ENCODE measurements at regions of chr20 and their contacts with region 1.

Region 1: DNA sequence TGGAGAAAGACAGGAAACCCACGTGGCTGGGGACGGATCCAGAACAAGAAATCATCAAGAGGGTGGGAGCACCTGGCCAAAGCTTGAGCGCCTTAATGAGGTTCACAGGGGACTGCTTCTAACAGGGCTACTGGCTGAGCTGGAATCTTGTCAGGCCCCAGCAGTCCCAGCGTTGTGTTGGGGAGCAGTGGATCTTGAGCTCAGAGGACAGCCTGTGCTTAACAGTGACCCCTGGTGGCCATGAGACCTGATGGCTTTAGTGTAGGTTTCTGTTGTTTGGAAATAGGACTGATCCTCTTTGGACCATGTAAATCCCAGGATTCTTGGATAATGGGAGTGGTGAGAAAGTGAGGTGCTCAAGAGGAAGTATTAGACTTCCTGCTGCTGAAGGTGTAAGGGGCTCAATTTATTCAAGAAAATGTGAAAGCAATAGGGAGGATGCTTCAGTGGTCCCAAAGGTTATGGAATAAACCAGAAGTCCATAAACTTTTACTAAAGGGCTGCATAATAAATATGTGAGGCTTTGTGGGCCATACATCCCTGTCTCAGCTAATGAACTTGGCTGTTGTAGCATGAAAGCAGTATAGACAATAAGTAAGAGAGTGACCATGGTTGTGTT is 216.2 kb downstream of the NFATC2 start:
- DNase-seq: no peak
- H3K4me3 ChIP-seq: no peak overlapping the region
- H3K27ac ChIP-seq: no peak overlapping the region
- H3K4me1 ChIP-seq: peaks cover 10% of the 10 kb centered on the region
- H3K27me3 ChIP-seq: no peaks in the 10 kb centered on the region
- CTCF ChIP-seq: peak; percentile 55 to 72

Region 2: GRCh38 chr20:50992733-50993457 is 333.4 kb before region 1 on chr20:
- CTCF ChIA-PET with region 1: no interaction called
- dilution Hi-C with region 1: loop called (anchors 5 kb)
- in situ Hi-C with region 1: no loop called
- intact Hi-C with region 1: no loop called
- DNase-seq: peak; percentile 79
- H3K4me3 ChIP-seq: no peak overlapping the region
- H3K27ac ChIP-seq: peak overlapping the region; percentile 60
- H3K4me1 ChIP-seq: peaks cover 29% of the 10 kb centered on the region
- H3K27me3 ChIP-seq: no peaks in the 10 kb centered on the region
- CTCF ChIP-seq: peak; percentile 79 to 81

Region 3: GRCh38 chr20:51249215-51249614 is 77.1 kb before region 1 on chr20:
- CTCF ChIA-PET with region 1: no interaction called
- dilution Hi-C with region 1: loop called (anchors 5 kb)
- in situ Hi-C with region 1: no loop called
- intact Hi-C with region 1: no loop called
- DNase-seq: no peak
- H3K4me3 ChIP-seq: no peak overlapping the region
- H3K27ac ChIP-seq: no peak overlapping the region
- H3K4me1 ChIP-seq: no peaks in the 10 kb centered on the region
- H3K27me3 ChIP-seq: no peaks in the 10 kb centered on the region
- CTCF ChIP-seq: no peak

Region 4: DNA sequence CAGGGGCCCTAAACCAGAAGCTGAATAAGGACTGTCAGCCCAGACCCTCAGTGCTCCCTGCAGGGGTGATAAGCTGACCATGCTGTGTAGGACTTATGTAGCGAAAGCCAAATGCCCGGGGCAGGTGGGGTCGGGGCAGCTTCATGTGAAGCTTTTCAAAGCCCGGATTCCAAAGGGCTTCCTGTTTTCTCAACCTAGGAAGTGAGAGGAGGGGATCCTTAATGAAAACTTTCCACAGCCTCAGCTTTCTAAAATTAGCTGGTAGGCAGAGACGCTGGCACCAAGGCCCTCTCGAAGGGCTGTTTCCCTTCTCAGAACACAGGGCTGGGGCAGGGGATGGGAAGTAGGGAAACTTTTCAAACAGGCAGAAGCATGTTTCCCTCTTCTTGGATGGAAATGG is 67.3 kb after region 1 on chr20:
- CTCF ChIA-PET with region 1: no interaction called
- dilution Hi-C with region 1: loop called (anchors 5 kb)
- in situ Hi-C with region 1: no loop called
- intact Hi-C with region 1: no loop called
- DNase-seq: no peak
- H3K4me3 ChIP-seq: no peak overlapping the region
- H3K27ac ChIP-seq: no peak overlapping the region
- H3K4me1 ChIP-seq: no peaks in the 10 kb centered on the region
- H3K27me3 ChIP-seq: no peaks in the 10 kb centered on the region
- CTCF ChIP-seq: no peak

Region 5: GRCh38 chr20:51616060-51616459 is 289.8 kb after region 1 on chr20:
- CTCF ChIA-PET with region 1: no interaction called
- dilution Hi-C with region 1: no loop called
- in situ Hi-C with region 1: no loop called
- intact Hi-C with region 1: no loop called
- DNase-seq: no peak
- H3K4me3 ChIP-seq: no peak overlapping the region
- H3K27ac ChIP-seq: no peak overlapping the region
- H3K4me1 ChIP-seq: no peaks in the 10 kb centered on the region
- H3K27me3 ChIP-seq: no peaks in the 10 kb centered on the region
- CTCF ChIP-seq: no peak